Gastrocnemius medialis (tissue), 4 donors: ENCODE measurements at regions of chr22 and their contacts with region 1.

Region 1: GRCh38 chr22:35840302-35840739 is 122.6 kb downstream of the APOL5 start:
- DNase-seq: peak; percentile 74 to 90
- ATAC-seq: peak; percentile 71 to 83
- H3K4me3 ChIP-seq: peak overlapping the region; percentile 51 to 60 (median 55)
- H3K27ac ChIP-seq: peak overlapping the region; percentile 86 to 94 (median 88)
- H3K4me1 ChIP-seq: peaks cover 82% of the 10 kb centered on the region in 2 donors
- H3K27me3 ChIP-seq: no peaks in the 10 kb centered on the region
- CTCF ChIP-seq: peak in 1 of 5 experiments; percentile 4
- POLR2A ChIP-seq: no peak

Region 2: GRCh38 chr22:35313311-35314121 is 526.8 kb before region 1 on chr22:
- in situ Hi-C with region 1: no loop called
- intact Hi-C with region 1: loop called (anchors 10 kb)
- DNase-seq: peak; percentile 95 to 98
- ATAC-seq: peak; percentile 58 to 61
- H3K4me3 ChIP-seq: peak overlapping the region in 2 of 4 donors; percentile 28 to 31
- H3K27ac ChIP-seq: peak overlapping the region; percentile 95 to 99 (median 97)
- H3K4me1 ChIP-seq: peaks cover 92 to 93% of the 10 kb centered on the region in 2 donors
- H3K27me3 ChIP-seq: no peaks in the 10 kb centered on the region
- CTCF ChIP-seq: no peak
- POLR2A ChIP-seq: no peak

Region 3: DNA sequence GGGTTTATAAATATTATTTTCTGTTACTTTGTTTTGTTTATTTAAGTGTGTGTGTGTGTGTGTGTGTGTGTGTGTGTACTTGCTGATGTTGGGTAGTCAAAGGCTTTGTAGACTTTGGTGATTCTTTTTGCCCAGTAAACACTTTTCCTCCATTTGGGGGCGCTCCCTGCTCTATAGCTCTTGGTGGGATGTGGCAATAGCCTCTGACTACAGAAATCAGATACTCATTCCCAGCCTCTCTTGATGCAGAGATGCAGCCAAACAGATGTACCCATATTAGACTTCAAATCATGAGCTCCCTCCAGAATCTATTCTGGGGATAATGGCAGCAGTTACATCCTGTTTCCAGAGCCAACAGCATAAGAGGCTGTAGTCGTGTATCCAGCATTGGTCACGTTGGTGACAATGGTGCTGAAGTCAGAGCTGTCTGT is 156.0 kb before region 1 on chr22:
- in situ Hi-C with region 1: no loop called
- intact Hi-C with region 1: loop called (anchors 5 kb)
- DNase-seq: peak; percentile 71 to 81
- ATAC-seq: peak; percentile 93 to 97
- H3K4me3 ChIP-seq: no peak overlapping the region
- H3K27ac ChIP-seq: peak overlapping the region; percentile 74 to 94 (median 90)
- H3K4me1 ChIP-seq: peaks cover 28 to 31% of the 10 kb centered on the region in 2 donors
- H3K27me3 ChIP-seq: no peaks in the 10 kb centered on the region
- CTCF ChIP-seq: peak in 4 of 5 experiments; percentile 40 to 53 (median 49)
- POLR2A ChIP-seq: no peak

Region 4: DNA sequence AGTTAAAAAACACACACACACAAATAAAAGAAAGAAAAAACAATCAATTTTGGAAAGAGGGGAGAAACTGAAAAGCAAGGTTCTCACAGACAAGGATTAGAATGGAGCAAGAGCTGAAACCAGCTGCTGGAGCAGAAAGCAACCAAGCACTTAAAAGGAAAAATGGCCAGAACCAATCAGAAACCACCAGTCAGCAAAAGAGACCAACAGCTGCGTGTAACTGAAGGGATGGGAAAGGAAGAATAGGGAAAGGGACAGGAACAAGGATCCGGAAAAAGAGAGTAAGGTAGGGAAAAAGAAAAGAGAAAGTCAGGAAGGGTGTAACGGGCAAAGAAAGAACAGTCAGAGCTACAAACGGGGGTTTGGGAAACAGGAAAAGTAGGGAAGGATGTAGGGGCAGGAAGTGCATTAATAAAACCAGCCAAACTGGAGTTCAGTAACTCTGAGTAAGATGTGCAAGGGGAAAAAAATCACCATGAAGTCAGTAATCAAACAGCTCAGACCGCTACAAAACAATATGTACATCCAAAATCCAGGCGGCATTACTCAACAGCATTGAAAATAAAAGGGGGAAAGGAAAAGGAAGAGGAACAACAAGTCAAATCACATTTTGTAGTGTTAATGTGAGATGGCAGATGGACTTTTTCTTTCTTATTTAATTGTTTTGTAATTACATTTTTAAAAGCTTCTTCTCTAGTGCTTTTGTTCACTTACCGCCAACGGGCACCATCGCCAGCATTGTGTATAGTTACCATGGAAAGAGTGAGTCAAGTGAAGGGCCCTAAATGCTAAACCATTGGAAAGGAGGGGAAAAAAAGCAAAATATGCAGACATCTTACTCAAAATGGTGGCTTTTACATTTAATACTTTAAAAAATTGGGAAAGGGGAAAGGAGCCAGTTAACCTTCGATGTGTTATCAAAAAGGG is 73.4 kb before region 1 on chr22:
- in situ Hi-C with region 1: no loop called
- intact Hi-C with region 1: loop called (anchors 5 kb)
- DNase-seq: no peak
- ATAC-seq: peak; percentile 54 to 66
- H3K4me3 ChIP-seq: peak overlapping the region in 1 of 4 donors; percentile 13
- H3K27ac ChIP-seq: peak overlapping the region; percentile 17 to 56 (median 41)
- H3K4me1 ChIP-seq: peaks cover 4 to 22% of the 10 kb centered on the region in 2 donors
- H3K27me3 ChIP-seq: no peaks in the 10 kb centered on the region
- CTCF ChIP-seq: no peak
- POLR2A ChIP-seq: no peak

Region 5: GRCh38 chr22:35883031-35883620 is 42.8 kb after region 1 on chr22:
- in situ Hi-C with region 1: no loop called
- intact Hi-C with region 1: loop called (anchors 5 kb)
- DNase-seq: peak in 1 of 2 donors; percentile 52
- ATAC-seq: peak; percentile 86 to 88
- H3K4me3 ChIP-seq: no peak overlapping the region
- H3K27ac ChIP-seq: no peak overlapping the region
- H3K4me1 ChIP-seq: peaks cover 60 to 70% of the 10 kb centered on the region in 2 donors
- H3K27me3 ChIP-seq: no peaks in the 10 kb centered on the region
- CTCF ChIP-seq: no peak
- POLR2A ChIP-seq: no peak

Region 6: GRCh38 chr22:36028646-36029405 is 188.5 kb after region 1 on chr22 and contains the start of gene RBFOX2:
- in situ Hi-C with region 1: no loop called
- intact Hi-C with region 1: loop called (anchors 5 kb)
- DNase-seq: peak; percentile 96 to 97
- ATAC-seq: peak; percentile 90 to 91
- H3K4me3 ChIP-seq: peak within 1 kb of the TSS; percentile 72 to 80 (median 74)
- H3K27ac ChIP-seq: peak within 1 kb of the TSS; percentile 83 to 92 (median 86)
- H3K4me1 ChIP-seq: peaks cover 13 to 15% of the 10 kb centered on the region in 2 donors
- H3K27me3 ChIP-seq: no peaks in the 10 kb centered on the region
- CTCF ChIP-seq: no peak
- POLR2A ChIP-seq: peak; percentile 56 to 67
- total RNA-seq, gene RBFOX2: 26.0 to 32.1 (median 28.6) TPM